CD8-positive, alpha-beta T cell (primary cell): ENCODE measurements at regions of chr12 and their contacts with region 1.

Region 1: GRCh38 chr12:110431957-110432587 is 18.1 kb downstream of the ARPC3 start:
- DNase-seq: no peak
- ATAC-seq: no peak
- H3K4me3 ChIP-seq: peak overlapping the region in 1 of 2 experiments; percentile 50
- H3K4me3 Mint-ChIP-seq: no peak overlapping the region
- H3K27ac ChIP-seq: no peak overlapping the region
- H3K27ac Mint-ChIP-seq: no peak overlapping the region
- H3K4me1 ChIP-seq: no peaks in the 10 kb centered on the region
- H3K4me1 Mint-ChIP-seq: peaks cover 2% of the 10 kb centered on the region
- H3K27me3 ChIP-seq: no peaks in the 10 kb centered on the region
- H3K27me3 Mint-ChIP-seq: no peaks in the 10 kb centered on the region
- CTCF ChIP-seq: no peak

Region 2: GRCh38 chr12:110100315-110100970 is 331.6 kb before region 1 on chr12:
- CTCF ChIA-PET with region 1: interaction called, 36 read pairs
- POLR2A ChIA-PET with region 1: interaction called, 3 read pairs
- intact Hi-C with region 1: loop called in 1 of 2 experiments (anchors 1 kb)
- DNase-seq: peak; percentile 15 to 82 (median 66)
- ATAC-seq: peak; percentile 85
- H3K4me3 ChIP-seq: no peak overlapping the region
- H3K4me3 Mint-ChIP-seq: no peak overlapping the region
- H3K27ac ChIP-seq: peak overlapping the region in 1 of 2 experiments; percentile 21
- H3K27ac Mint-ChIP-seq: peak overlapping the region; percentile 24
- H3K4me1 ChIP-seq: peaks cover 4% of the 10 kb centered on the region
- H3K4me1 Mint-ChIP-seq: peaks cover 7% of the 10 kb centered on the region
- H3K27me3 ChIP-seq: no peaks in the 10 kb centered on the region
- H3K27me3 Mint-ChIP-seq: no peaks in the 10 kb centered on the region
- CTCF ChIP-seq: peak; percentile 99

Region 3: DNA sequence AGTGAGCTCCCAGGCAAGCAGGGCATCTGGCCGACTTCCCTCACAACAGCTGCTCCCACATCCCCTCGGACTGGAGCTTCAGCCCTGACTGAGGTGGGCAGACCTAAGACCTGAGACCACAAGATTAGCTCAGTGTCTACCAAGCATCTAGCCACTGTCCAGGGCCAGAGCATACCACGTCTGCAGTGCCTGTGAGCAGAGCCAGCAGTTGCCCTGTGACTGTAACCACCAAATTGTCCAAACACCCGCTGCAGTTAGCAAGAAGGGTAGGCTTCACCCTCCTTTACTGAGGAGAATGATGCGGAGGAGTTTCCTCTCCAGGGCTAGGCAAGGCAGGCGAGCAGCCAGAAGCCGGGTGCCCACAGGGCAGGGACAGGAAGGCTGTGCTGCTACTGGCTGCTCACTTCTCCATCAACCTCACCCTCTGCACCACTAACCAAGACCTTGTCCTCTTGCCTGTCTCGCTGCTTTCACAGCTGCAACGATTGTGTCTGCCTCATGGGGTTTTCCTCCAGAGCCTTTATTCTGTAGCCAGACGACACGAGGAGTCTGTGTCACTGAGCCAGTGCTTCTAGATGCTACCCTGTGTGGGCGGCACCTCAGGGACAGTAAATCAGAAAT is 82.4 kb before region 1 on chr12:
- CTCF ChIA-PET with region 1: interaction called, 14 read pairs
- POLR2A ChIA-PET with region 1: interaction called, 3 read pairs
- intact Hi-C with region 1: no loop called
- DNase-seq: peak in 8 of 9 experiments; percentile 7 to 73 (median 48)
- ATAC-seq: peak; percentile 89
- H3K4me3 ChIP-seq: no peak overlapping the region
- H3K4me3 Mint-ChIP-seq: peak overlapping the region; percentile 53
- H3K27ac ChIP-seq: peak overlapping the region in 1 of 2 experiments; percentile 56
- H3K27ac Mint-ChIP-seq: peak overlapping the region; percentile 89
- H3K4me1 ChIP-seq: peaks cover 26% of the 10 kb centered on the region
- H3K4me1 Mint-ChIP-seq: peaks cover 38% of the 10 kb centered on the region
- H3K27me3 ChIP-seq: no peaks in the 10 kb centered on the region
- H3K27me3 Mint-ChIP-seq: no peaks in the 10 kb centered on the region
- CTCF ChIP-seq: no peak

Region 4: DNA sequence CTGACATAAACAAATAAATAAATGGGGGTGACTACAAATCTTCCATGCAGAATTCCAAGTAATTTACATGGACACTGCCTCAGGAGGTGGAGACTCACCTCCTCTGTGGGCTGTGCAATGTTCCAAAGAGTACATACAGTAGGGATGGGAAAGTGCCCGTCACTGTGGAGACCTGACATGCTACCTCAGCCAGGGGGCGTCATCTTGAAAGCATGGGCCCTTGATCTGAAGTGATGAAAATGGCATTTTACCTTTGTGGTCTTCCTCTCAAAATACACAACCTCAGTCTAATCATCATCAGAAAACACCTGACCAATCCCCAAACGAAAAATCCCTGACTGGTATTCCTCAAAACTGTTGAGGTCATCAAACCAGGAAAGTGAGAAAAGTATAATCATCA is 77.0 kb before region 1 on chr12:
- CTCF ChIA-PET with region 1: interaction called, 14 read pairs
- POLR2A ChIA-PET with region 1: no interaction called
- intact Hi-C with region 1: loop called (anchors 1 kb)
- DNase-seq: peak in 6 of 9 experiments; percentile 8 to 56 (median 28)
- ATAC-seq: peak; percentile 65
- H3K4me3 ChIP-seq: no peak overlapping the region
- H3K4me3 Mint-ChIP-seq: no peak overlapping the region
- H3K27ac ChIP-seq: no peak overlapping the region
- H3K27ac Mint-ChIP-seq: no peak overlapping the region
- H3K4me1 ChIP-seq: peaks cover 12% of the 10 kb centered on the region
- H3K4me1 Mint-ChIP-seq: peaks cover 25% of the 10 kb centered on the region
- H3K27me3 ChIP-seq: no peaks in the 10 kb centered on the region
- H3K27me3 Mint-ChIP-seq: no peaks in the 10 kb centered on the region
- CTCF ChIP-seq: peak; percentile 36

Region 5: GRCh38 chr12:110403146-110403975 is 28.7 kb before region 1 on chr12 and contains the start of gene ANAPC7:
- CTCF ChIA-PET with region 1: interaction called, 4 read pairs
- POLR2A ChIA-PET with region 1: interaction called, 4 read pairs
- intact Hi-C with region 1: loop called (anchors 1 to 2 kb)
- DNase-seq: peak; percentile 69 to 93 (median 87)
- ATAC-seq: peak; percentile 96
- H3K4me3 ChIP-seq: peak within 1 kb of the TSS; percentile 87 to 89
- H3K4me3 Mint-ChIP-seq: peak within 1 kb of the TSS; percentile 100
- H3K27ac ChIP-seq: peak within 1 kb of the TSS; percentile 78 to 96
- H3K27ac Mint-ChIP-seq: peak within 1 kb of the TSS; percentile 98
- H3K4me1 ChIP-seq: peaks cover 20% of the 10 kb centered on the region
- H3K4me1 Mint-ChIP-seq: peaks cover 33% of the 10 kb centered on the region
- H3K27me3 ChIP-seq: no peaks in the 10 kb centered on the region
- H3K27me3 Mint-ChIP-seq: no peaks in the 10 kb centered on the region
- CTCF ChIP-seq: no peak
- total RNA-seq, gene ANAPC7: 22.1 to 23.2 TPM

Region 6: DNA sequence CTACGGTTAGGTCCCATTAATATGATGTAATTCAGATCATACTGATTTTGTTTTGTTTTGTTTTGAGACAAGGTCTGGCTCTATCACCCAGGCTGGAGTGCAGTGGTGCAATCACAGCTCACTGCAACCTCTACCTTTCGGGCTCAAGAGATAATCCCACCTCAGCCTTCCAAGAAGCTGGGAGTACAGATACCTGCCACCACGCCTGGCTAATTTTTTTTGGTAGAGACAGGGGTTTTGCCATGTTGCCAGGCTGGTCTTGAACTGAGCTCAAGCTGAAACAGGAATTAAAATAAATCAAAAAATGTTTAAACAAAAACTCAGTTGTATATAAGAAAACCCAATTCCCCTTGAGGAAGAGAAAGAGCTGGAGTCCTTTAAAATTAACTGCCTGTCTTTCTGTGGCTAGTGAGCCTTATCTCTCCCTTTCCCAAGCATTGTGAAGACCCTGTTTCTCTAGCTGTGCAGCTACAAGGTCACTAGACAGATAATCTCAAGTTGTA is 10.9 kb before region 1 on chr12:
- CTCF ChIA-PET with region 1: interaction called, 12 read pairs
- POLR2A ChIA-PET with region 1: interaction called, 3 read pairs
- intact Hi-C with region 1: no loop called
- DNase-seq: no peak
- ATAC-seq: no peak
- H3K4me3 ChIP-seq: no peak overlapping the region
- H3K4me3 Mint-ChIP-seq: no peak overlapping the region
- H3K27ac ChIP-seq: no peak overlapping the region
- H3K27ac Mint-ChIP-seq: no peak overlapping the region
- H3K4me1 ChIP-seq: no peaks in the 10 kb centered on the region
- H3K4me1 Mint-ChIP-seq: no peaks in the 10 kb centered on the region
- H3K27me3 ChIP-seq: no peaks in the 10 kb centered on the region
- H3K27me3 Mint-ChIP-seq: peaks cover 8% of the 10 kb centered on the region
- CTCF ChIP-seq: no peak

Region 7: GRCh38 chr12:110468212-110469048 is 36.4 kb after region 1 on chr12 and contains the starts of genes FAM216A and GPN3:
- CTCF ChIA-PET with region 1: interaction called, 7 read pairs
- POLR2A ChIA-PET with region 1: interaction called, 17 read pairs
- intact Hi-C with region 1: loop called in 1 of 2 experiments (anchors 1 kb)
- DNase-seq: peak; percentile 89 to 98 (median 95)
- ATAC-seq: peak; percentile 89
- H3K4me3 ChIP-seq: peak within 1 kb of the TSS; percentile 90 to 96
- H3K4me3 Mint-ChIP-seq: peak within 1 kb of the TSS; percentile 99
- H3K27ac ChIP-seq: peak within 1 kb of the TSS; percentile 74 to 87
- H3K27ac Mint-ChIP-seq: peak within 1 kb of the TSS; percentile 95
- H3K4me1 ChIP-seq: peaks cover 23% of the 10 kb centered on the region
- H3K4me1 Mint-ChIP-seq: peaks cover 43% of the 10 kb centered on the region
- H3K27me3 ChIP-seq: no peaks in the 10 kb centered on the region
- H3K27me3 Mint-ChIP-seq: no peaks in the 10 kb centered on the region
- CTCF ChIP-seq: no peak
- total RNA-seq, gene FAM216A: 3.5 to 4.5 TPM
- total RNA-seq, gene GPN3: 5.9 to 6.2 TPM

Region 8: DNA sequence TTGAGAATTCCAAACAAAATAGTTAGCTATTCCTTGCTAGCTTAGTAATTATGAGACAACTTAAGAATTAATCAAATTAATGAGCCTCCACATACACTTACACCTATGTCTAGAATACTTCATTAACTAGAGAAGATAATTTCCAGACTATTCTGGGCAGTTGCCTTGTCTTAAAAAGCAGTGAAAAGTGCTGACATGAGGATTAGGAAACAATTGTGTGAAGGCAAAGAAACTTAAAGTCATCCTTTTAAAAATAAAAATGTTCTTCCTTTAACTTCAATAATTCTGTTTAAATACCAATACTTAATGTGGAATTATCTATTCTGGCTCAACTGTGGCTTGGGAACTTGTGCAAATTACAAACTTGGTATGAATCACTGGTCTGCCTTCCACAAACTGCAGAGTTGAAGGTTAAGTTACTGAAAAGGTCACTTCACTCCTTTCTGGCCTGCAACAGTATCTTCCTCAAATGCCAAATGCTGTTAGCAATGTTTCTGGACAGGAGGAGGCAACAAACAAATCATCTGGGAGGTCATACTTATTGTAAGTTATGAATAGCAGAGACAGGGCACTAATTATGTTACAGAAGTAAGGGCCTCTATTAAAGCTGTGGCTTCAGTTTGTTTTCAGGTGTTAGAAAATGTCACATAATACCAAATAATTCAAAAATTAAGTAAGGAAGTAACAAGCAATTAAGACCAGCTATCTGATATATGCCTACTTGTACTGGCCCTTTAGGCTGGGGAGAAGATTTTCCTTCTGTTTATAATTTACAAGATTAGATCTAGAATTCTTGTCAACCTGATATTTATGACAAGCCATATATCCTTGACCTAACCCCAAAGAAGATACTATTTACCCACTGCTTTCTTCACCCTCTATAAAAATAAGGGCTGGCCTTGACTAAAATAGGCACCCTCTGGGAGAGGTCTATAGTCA is 131.9 kb after region 1 on chr12:
- CTCF ChIA-PET with region 1: no interaction called
- POLR2A ChIA-PET with region 1: no interaction called
- intact Hi-C with region 1: no loop called
- DNase-seq: no peak
- ATAC-seq: no peak
- H3K4me3 ChIP-seq: no peak overlapping the region
- H3K4me3 Mint-ChIP-seq: no peak overlapping the region
- H3K27ac ChIP-seq: peak overlapping the region; percentile 9 to 61
- H3K27ac Mint-ChIP-seq: peak overlapping the region; percentile 82
- H3K4me1 ChIP-seq: peaks cover 61% of the 10 kb centered on the region
- H3K4me1 Mint-ChIP-seq: peaks cover 72% of the 10 kb centered on the region
- H3K27me3 ChIP-seq: no peaks in the 10 kb centered on the region
- H3K27me3 Mint-ChIP-seq: no peaks in the 10 kb centered on the region
- CTCF ChIP-seq: no peak

Region 9: GRCh38 chr12:110577717-110578521 is 145.8 kb after region 1 on chr12:
- CTCF ChIA-PET with region 1: no interaction called
- POLR2A ChIA-PET with region 1: no interaction called
- intact Hi-C with region 1: no loop called
- DNase-seq: peak in 8 of 9 experiments; percentile 11 to 73 (median 36)
- ATAC-seq: peak; percentile 37
- H3K4me3 ChIP-seq: peak overlapping the region; percentile 16 to 26
- H3K4me3 Mint-ChIP-seq: peak overlapping the region; percentile 76
- H3K27ac ChIP-seq: peak overlapping the region; percentile 44 to 93
- H3K27ac Mint-ChIP-seq: peak overlapping the region; percentile 88
- H3K4me1 ChIP-seq: peaks cover 58% of the 10 kb centered on the region
- H3K4me1 Mint-ChIP-seq: peaks cover 78% of the 10 kb centered on the region
- H3K27me3 ChIP-seq: no peaks in the 10 kb centered on the region
- H3K27me3 Mint-ChIP-seq: no peaks in the 10 kb centered on the region
- CTCF ChIP-seq: no peak